H1 (cell line): ENCODE measurements at regions of chr3 and their contacts with region 1.

Region 1: GRCh38 chr3:139361276-139361675 is 17.5 kb downstream of the MRPS22 start:
- DNase-seq: no peak
- H3K4me3 ChIP-seq: no peak overlapping the region
- H3K27ac ChIP-seq: no peak overlapping the region
- H3K4me1 ChIP-seq: no peaks in the 10 kb centered on the region
- H3K27me3 ChIP-seq: no peaks in the 10 kb centered on the region
- CTCF ChIP-seq: no peak
- EP300 ChIP-seq: no peak
- POLR2A ChIP-seq: no peak
- RAD21 ChIP-seq: no peak

Region 2: DNA sequence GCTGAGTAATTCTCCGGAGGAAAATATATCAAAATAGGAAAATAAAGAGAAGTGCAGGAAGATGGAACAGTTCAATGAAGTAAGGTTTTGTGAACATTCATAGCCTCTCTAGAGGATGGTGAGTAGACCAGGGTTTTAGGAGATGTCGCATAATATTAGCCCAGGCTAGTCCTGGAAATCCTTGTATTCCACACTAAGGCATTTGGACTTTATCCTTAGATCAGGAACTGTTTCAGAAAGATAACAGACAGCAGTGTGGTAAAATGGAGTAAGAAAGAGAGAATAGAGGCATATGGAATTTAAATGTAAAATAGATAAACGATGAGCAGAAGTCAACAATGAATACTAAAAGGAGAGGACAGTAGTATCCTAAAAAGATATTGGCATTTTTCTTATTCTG is 16.1 kb after region 1 on chr3:
- CTCF ChIA-PET with region 1: interaction called, 7 read pairs
- POLR2A ChIA-PET with region 1: interaction called, 10 read pairs
- DNase-seq: no peak
- H3K4me3 ChIP-seq: no peak overlapping the region
- H3K27ac ChIP-seq: no peak overlapping the region
- H3K4me1 ChIP-seq: no peaks in the 10 kb centered on the region
- H3K27me3 ChIP-seq: no peaks in the 10 kb centered on the region
- CTCF ChIP-seq: no peak
- EP300 ChIP-seq: no peak
- POLR2A ChIP-seq: no peak
- RAD21 ChIP-seq: no peak